ENCODE measurements at regions of chr13 and their contacts with region 1.

Region 1: DNA sequence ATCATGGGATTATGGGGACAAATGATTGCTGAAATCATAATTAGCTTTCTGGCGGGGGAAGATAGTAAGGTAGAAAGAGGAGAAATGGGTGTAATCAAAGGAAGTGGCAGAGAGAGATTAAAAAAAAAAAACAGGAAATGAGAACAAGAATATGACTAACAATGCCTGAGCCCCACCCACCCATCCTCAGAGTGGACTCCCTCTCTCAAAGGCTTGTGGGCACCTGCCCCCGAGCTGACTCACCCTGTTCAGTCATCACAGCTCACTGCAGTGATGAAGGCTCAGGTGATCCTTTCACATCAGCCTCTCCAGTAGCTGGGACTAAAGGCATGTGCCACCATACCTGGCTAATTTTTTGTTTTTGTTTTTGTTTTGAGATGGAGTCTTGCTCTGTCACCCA is 26.4 kb upstream of the TPT1 start:
- DNase-seq: peak; percentile 33 to 62
- H3K4me3 ChIP-seq: no peak overlapping the region
- H3K4me1 ChIP-seq: peaks cover 6% of the 10 kb centered on the region
- H3K27me3 ChIP-seq: no peaks in the 10 kb centered on the region

Region 2: DNA sequence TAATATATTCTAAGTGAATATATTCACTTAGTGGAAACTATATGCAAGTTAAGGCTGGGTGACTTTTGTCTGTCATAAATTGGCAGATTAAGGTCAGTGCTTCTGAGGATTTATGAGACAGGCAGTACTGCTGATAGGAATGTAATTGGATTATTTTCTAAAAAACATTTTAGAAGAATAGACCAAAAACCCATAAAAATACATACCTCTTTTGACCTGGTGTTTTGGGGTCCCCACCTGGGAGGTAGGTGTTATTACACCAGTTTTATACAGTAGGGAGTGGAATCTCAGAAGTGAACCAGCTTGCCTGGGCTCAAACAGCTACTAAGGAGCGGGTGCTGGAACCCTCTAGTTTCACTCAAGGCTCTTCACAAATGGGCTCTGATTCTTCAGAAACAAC is 122.7 kb after region 1 on chr13:
- in situ Hi-C with region 1: loop called (anchors 25 kb)
- DNase-seq: peak; percentile 11 to 14
- H3K4me3 ChIP-seq: no peak overlapping the region
- H3K4me1 ChIP-seq: no peaks in the 10 kb centered on the region
- H3K27me3 ChIP-seq: no peaks in the 10 kb centered on the region

Region 3: DNA sequence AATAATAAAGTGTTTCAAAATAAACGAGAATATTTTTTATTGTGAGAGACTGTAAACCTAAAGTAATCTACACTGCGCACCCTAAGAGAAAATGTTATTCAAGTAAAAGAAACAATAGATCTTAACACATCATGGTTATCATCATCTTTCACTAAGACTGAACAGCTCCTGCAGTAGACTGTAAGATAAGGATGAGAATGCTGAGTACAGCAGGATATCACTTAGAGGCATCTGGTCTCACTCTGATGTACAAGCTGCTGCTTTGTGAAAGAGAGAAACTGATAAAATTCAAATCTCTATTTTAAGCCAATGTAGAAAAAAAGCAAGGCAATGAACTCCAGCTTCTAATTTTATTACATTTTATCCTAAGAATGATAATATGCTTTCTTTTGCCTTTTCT is 1791.2 kb after region 1 on chr13:
- in situ Hi-C with region 1: no loop called
- DNase-seq: no peak
- H3K4me3 ChIP-seq: no peak overlapping the region
- H3K4me1 ChIP-seq: no peaks in the 10 kb centered on the region
- H3K27me3 ChIP-seq: no peaks in the 10 kb centered on the region

Measured in HAP-1 (cell line).